Activated CD4-positive, alpha-beta T cell treated with anti-CD3 and anti-CD28 coated beads, Interleukin-2, amount 10 ng/mL, durations not matched to agents 24 days and 14 days (primary cell): ENCODE measurements at regions of chrX and their contacts with region 1.

Region 1: DNA sequence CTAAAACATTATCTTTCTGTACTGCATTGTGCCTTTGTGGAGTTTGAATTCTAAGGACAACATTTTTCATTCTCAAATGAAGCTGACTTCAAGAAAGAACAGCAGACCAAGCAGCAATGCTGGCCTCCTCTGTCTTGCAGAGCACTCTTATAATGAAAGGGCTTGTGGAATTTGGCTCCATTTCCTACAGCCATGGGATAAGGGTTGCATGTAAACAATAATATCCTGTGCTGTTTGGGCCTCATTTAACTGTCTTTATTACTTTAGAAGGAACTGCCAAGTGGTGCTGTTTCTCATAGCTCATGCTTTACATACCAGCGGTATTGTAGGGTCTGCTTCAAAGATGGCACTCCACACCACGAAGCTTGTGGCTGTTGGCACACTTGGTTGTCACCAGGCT is 111.4 kb upstream of the EOLA2 start:
- DNase-seq: no peak
- H3K4me3 Mint-ChIP-seq: no peak overlapping the region
- H3K27ac Mint-ChIP-seq: no peak overlapping the region
- H3K4me1 Mint-ChIP-seq: no peaks in the 10 kb centered on the region
- H3K27me3 Mint-ChIP-seq: peaks cover 7% of the 10 kb centered on the region

Region 2: DNA sequence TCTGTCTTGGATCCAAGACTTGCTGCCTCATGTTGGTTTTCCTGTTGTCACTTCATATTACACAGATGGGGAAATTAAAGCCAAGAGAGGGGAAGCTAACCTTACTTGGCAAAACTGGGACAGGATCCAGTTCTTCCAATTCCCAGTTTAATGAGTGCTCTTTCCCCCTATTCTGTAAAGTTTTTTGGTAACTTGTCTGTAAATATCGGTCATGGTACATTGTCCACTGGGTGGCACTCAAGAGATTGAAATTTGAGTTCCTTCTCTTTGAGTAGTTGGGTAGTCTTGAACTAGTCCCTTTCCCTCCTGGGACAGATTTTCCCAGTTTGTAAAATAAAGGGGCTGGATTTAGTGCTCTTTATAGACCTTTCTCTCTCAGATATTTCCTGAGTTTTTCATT is 99.0 kb before region 1 on chrX:
- intact Hi-C with region 1: no loop called
- DNase-seq: peak; percentile 68
- H3K4me3 Mint-ChIP-seq: no peak overlapping the region
- H3K27ac Mint-ChIP-seq: no peak overlapping the region
- H3K4me1 Mint-ChIP-seq: no peaks in the 10 kb centered on the region
- H3K27me3 Mint-ChIP-seq: no peaks in the 10 kb centered on the region

Region 3: DNA sequence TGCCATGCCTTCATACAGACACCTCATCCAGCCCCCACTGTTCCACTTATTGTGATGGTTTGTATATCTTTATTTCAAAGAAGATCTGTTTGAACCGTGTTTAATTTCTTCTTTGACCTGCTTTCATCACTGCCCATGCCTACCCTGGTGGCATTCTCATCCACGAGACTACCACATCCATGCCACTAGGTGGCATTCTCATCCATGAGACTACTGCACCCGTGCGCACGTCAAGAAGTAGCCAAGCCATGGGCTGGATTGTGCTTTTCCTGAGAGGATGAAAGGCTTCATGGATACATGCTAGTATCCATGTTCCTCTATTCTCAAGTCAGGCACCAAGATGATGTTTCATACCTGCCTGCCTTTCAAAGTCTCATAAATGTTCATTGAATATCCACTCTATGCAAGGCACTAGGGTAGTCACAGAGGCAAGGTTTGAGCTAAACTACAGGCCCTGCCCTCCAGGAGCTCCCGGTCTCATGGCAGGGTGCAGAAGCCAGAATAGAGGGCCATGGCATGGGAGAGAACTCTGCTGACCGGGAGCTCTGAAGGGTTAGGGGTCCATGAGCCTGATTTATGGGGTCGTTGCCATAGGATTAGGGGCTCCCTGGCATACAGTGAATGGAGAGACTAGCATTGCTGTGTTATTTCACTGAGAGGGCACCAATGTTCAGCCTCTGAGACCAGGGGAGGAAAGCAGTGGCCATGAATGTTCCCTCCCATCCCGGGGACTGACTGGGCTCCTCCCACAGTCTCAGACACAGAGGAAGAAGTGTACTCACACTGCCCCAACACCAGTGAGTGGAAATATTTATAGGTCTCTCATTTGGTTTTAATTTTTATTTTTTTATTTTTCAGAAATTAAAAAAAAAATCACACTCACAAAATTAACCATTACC is 86.5 kb before region 1 on chrX:
- intact Hi-C with region 1: loop called (anchors 2 kb)
- DNase-seq: peak; percentile 74
- H3K4me3 Mint-ChIP-seq: no peak overlapping the region
- H3K27ac Mint-ChIP-seq: no peak overlapping the region
- H3K4me1 Mint-ChIP-seq: no peaks in the 10 kb centered on the region
- H3K27me3 Mint-ChIP-seq: no peaks in the 10 kb centered on the region

Region 4: GRCh38 chrX:150032741-150033140 is 16.9 kb before region 1 on chrX:
- intact Hi-C with region 1: no loop called
- DNase-seq: no peak
- H3K4me3 Mint-ChIP-seq: no peak overlapping the region
- H3K27ac Mint-ChIP-seq: no peak overlapping the region
- H3K4me1 Mint-ChIP-seq: peaks cover 10% of the 10 kb centered on the region
- H3K27me3 Mint-ChIP-seq: peaks cover 13% of the 10 kb centered on the region

Region 5: DNA sequence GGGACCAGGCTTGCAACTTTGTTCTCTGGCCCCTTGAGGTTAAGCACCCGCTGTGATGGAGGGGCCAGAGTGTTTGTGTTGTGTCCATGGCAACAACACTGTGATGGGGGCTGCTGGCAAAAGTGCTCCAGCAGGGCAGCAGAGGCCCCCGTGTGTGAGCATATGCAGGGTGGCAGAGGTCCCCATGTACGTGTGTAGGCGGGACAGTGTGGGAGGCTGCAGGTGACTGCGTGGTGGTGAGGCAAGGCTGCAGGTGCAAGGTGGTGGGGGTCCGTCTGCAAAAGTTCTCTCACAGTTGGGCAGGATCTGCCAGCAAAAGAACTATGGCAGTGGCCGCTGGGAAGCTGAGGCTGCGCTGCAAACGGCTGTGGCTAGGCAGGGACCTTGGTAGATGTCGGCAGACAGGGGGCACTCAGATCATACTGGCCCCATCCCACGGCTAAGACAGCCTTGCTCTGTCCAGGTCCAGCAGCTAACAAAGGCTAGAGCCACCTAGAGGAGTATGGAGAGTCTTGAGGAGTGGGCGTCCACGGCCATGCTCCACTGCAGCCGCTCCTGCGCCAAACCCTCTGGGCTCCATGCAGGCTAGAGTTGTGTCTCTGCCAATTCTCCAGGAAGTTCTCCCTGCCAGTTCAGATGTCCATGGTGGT is 1467.0 kb after region 1 on chrX:
- intact Hi-C with region 1: no loop called
- DNase-seq: no peak
- H3K4me3 Mint-ChIP-seq: no peak overlapping the region
- H3K27ac Mint-ChIP-seq: no peak overlapping the region
- H3K4me1 Mint-ChIP-seq: no peaks in the 10 kb centered on the region
- H3K27me3 Mint-ChIP-seq: peaks cover 1% of the 10 kb centered on the region